ENCODE measurements at regions of chr17 and their contacts with region 1.

Region 1: GRCh38 chr17:38799378-38800236 is at the start of gene PIP4K2B:
- DNase-seq: peak; percentile 97
- ATAC-seq: peak; percentile 96
- total RNA-seq, gene PIP4K2B: 49.7 TPM

Region 2: DNA sequence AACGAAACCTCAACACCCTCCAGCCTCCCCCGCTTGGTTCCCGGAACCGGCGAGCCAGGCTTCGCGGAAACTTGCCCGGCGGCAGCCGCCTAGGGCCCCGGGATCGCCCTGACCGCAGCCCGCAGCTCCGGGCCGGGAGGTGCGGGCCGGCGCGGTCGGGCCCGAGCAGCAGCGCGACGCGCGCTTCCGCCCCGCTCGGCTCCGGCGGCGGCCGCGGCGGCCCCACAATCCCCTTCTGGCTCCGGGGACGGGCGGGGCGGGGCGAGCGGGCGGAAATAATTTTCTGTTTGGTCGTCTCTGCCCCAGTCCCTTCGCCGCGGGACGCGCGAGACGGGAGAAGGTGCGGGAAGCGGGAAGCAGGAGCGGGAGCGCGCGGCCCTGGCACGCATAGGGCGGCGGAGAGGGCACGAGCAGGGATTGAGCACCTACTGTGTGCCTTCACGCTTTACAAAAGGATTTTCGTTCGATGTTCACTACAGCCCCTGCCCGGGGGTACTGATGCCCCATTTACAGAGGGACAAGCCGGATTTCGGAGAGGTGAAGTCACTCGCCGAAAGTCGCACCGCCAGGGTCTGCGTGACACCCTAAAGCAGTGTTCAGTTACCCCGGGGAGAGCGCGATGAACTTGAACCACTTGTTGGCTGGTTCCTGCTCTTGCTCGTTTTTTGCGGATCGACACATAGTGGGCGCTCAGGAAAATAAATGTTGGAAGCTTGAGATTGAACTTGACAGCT is 97.3 kb before region 1 on chr17:
- intact Hi-C with region 1: loop called (anchors 5 kb)
- DNase-seq: peak; percentile 92
- ATAC-seq: peak; percentile 67

Region 3: GRCh38 chr17:38752119-38752929 is 47.3 kb before region 1 on chr17 and contains the start of gene PSMB3:
- intact Hi-C with region 1: loop called (anchors 5 kb)
- DNase-seq: peak; percentile 97
- ATAC-seq: peak; percentile 86
- total RNA-seq, gene PSMB3: 175 TPM

Region 4: GRCh38 chr17:38824899-38825761 is 25.5 kb after region 1 on chr17 and contains the start of gene CWC25:
- intact Hi-C with region 1: loop called (anchors 1 kb)
- DNase-seq: peak; percentile 97
- ATAC-seq: peak; percentile 93
- total RNA-seq, gene CWC25: 9.4 TPM